PC-3 (cell line): ENCODE measurements at regions of chr15 and their contacts with region 1.

Region 1: GRCh38 chr15:50051803-50052419 is 67.1 kb downstream of the ATP8B4 start:
- DNase-seq: peak; percentile 87
- ATAC-seq: peak; percentile 97
- H3K4me3 ChIP-seq: no peak overlapping the region
- H3K27ac ChIP-seq: peak overlapping the region; percentile 89
- H3K4me1 ChIP-seq: peaks cover 20% of the 10 kb centered on the region
- H3K27me3 ChIP-seq: no peaks in the 10 kb centered on the region
- CTCF ChIP-seq: peak; percentile 89

Region 2: DNA sequence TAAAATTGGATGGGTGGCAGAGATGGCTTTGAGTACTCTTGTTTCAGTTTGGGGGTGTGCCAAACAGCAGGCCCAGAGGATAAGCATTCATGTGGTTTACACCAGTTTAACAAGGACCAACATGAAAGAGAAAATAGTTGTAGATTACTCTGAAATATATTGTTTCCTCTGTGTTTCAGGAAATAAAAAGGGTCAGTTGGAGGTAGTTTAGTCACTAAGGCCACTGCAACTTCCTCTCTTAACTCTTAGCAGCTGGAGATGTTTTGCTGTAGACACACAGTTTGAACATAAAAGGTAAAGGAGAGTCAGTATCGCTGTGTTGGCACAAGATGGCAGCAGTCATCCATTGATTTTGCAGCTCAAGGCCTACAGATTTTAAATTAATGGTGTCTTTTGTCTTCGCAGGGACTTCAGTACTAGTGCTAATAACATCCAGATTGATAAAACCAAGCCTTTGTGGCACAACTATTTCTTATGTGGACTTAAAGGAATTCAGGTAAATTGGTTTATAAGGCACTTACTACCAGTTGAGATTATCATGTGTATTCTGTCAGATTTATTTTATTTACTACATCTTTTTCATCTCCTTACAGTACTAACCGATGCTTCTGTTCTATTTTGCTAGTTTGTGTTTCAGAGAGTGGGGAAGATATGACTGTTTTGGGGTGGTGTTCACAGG is 816.3 kb before region 1 on chr15:
- CTCF ChIA-PET with region 1: interaction called, 4 read pairs
- POLR2A ChIA-PET with region 1: no interaction called
- intact Hi-C with region 1: loop called (anchors 5 kb)
- DNase-seq: peak; percentile 60
- ATAC-seq: peak; percentile 88
- H3K4me3 ChIP-seq: no peak overlapping the region
- H3K27ac ChIP-seq: 0 out of 2 replicates have a peak overlapping the region, but pooled peaks have one; percentile 10
- H3K4me1 ChIP-seq: peaks cover 5% of the 10 kb centered on the region; the same call in 1 of the 2 replicates
- H3K27me3 ChIP-seq: no peaks in the 10 kb centered on the region
- CTCF ChIP-seq: peak; percentile 81

Region 3: DNA sequence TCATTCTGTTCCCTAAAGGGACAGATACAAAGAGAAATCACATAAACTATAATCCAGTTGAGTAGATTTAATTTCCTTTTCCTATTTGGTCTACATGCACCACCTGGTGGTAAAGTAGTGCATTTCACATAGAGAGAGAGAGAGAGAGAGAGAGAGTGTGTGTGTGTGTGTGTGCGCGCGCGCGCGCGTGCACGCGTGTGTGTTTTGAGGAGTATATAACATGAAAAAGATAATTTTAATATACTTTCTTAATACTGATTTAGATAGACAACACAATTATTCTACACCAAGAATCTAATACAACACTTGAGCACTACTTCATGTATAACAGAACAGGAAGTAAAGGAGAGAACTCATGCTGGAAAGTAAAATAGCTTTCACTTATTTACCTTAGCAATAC is 629.9 kb before region 1 on chr15:
- CTCF ChIA-PET with region 1: interaction called, 5 read pairs
- POLR2A ChIA-PET with region 1: no interaction called
- intact Hi-C with region 1: loop called (anchors 5 kb)
- DNase-seq: peak; percentile 68
- ATAC-seq: peak; percentile 53
- H3K4me3 ChIP-seq: no peak overlapping the region
- H3K27ac ChIP-seq: no peak overlapping the region
- H3K4me1 ChIP-seq: no peaks in the 10 kb centered on the region
- H3K27me3 ChIP-seq: no peaks in the 10 kb centered on the region
- CTCF ChIP-seq: peak; percentile 79

Region 4: GRCh38 chr15:49620658-49621368 is 431.1 kb before region 1 on chr15 and contains the starts of genes DTWD1 and FAM227B:
- CTCF ChIA-PET with region 1: no interaction called
- POLR2A ChIA-PET with region 1: no interaction called
- intact Hi-C with region 1: loop called (anchors 5 kb)
- DNase-seq: peak; percentile 94
- ATAC-seq: peak; percentile 99
- H3K4me3 ChIP-seq: peak within 1 kb of the TSS; percentile 81
- H3K27ac ChIP-seq: peak within 1 kb of the TSS; percentile 82
- H3K4me1 ChIP-seq: peaks cover 15% of the 10 kb centered on the region
- H3K27me3 ChIP-seq: no peaks in the 10 kb centered on the region
- CTCF ChIP-seq: no peak
- total RNA-seq, gene DTWD1: 9.1 and 10.9 TPM in 2 replicates
- total RNA-seq, gene FAM227B: 0.98 and 1.6 TPM in 2 replicates

Region 5: DNA sequence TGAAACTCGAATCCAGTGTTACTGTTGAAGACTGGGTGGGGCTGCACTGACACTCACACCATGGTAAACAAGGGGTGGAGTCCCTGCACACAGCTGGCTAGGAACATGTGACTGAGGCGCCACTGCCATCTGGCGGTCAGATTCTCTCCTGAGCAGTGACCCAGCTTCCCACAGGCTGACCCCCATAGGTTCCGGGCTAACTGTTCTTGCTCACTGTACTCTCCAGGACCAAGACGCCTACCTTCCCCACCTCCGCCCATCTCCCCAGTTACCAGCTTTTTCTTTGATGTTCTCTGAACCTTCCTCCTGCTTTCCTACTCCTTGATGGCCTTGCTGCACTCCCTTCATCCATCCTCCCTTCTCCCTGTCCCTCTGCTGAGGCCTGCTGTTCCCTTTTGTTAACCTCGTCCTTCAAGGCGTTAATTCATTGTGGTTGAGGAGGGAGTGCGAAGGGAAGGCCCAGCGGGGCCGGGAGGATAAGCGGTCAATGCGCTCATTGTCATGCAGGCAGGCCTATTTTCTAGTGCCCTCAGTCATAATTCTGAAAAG is 48.1 kb before region 1 on chr15:
- CTCF ChIA-PET with region 1: no interaction called
- POLR2A ChIA-PET with region 1: no interaction called
- intact Hi-C with region 1: loop called (anchors 1 kb)
- DNase-seq: peak; percentile 87
- ATAC-seq: peak; percentile 100
- H3K4me3 ChIP-seq: no peak overlapping the region
- H3K27ac ChIP-seq: no peak overlapping the region; the same call in 1 of the 2 replicates
- H3K4me1 ChIP-seq: peaks cover 10% of the 10 kb centered on the region; the same call in 1 of the 2 replicates
- H3K27me3 ChIP-seq: no peaks in the 10 kb centered on the region
- CTCF ChIP-seq: peak; percentile 78